Activated CD4-positive, alpha-beta memory T cell treated with anti-CD3 and anti-CD28 coated beads for 36 hours (primary cell): ENCODE measurements at regions of chr12 and their contacts with region 1.

Region 1: GRCh38 chr12:75289753-75290152 is 40.4 kb downstream of the CAPS2 start:
- DNase-seq: no peak
- H3K4me3 Mint-ChIP-seq: no peak overlapping the region
- H3K27ac Mint-ChIP-seq: no peak overlapping the region
- H3K4me1 Mint-ChIP-seq: no peaks in the 10 kb centered on the region
- H3K27me3 Mint-ChIP-seq: no peaks in the 10 kb centered on the region

Region 2: DNA sequence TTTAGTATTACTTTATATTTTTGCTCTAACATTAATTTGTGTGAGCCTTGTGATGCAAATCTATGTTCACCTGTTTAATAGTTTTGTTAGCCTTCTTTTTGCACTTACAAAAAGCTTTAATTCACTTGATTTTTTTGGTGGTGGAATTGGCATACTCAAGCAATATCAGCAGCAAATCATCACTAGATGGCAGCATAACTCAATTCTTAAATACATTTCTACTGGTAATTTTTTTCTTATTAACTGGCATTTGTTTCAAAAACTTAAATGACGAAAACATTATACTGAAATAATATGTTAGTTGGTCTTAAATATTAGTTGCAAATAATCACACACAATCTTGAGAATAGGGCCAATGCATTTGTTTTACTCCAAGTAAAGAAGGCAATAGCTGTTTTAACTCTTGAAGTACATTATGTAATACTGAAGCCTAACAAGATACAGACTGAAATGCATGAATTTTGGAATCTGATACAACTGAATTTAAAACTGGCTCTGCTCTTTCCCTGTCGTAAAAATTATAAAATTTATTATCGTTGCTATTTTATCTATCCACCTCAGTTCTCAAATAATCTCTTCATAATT is 600.6 kb before region 1 on chr12:
- CTCF ChIA-PET with region 1: interaction called, 8 read pairs
- POLR2A ChIA-PET with region 1: no interaction called
- intact Hi-C with region 1: loop called (anchors 5 kb)
- DNase-seq: no peak
- H3K4me3 Mint-ChIP-seq: no peak overlapping the region
- H3K27ac Mint-ChIP-seq: no peak overlapping the region
- H3K4me1 Mint-ChIP-seq: no peaks in the 10 kb centered on the region
- H3K27me3 Mint-ChIP-seq: peaks cover 5% of the 10 kb centered on the region

Region 3: DNA sequence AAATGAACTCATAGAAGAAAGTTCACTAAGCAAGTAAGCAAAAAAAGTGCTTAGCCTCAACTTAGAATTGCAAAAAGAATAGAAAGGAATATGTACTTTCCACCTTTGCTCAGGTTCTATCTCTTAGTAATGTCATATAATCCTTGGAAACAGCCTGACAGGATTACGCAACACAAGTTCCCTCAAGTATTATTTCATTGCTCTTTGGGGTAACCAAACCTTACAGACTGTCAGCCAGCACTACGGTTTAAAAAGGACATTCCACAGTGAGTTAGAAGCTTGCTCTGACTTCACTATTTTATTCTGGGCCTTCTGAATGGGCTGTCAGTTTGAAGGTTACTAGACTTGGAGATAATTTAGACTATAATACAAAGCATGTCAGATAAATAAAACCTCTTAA is 488.1 kb before region 1 on chr12:
- CTCF ChIA-PET with region 1: no interaction called
- POLR2A ChIA-PET with region 1: no interaction called
- intact Hi-C with region 1: loop called (anchors 1 kb)
- DNase-seq: no peak
- H3K4me3 Mint-ChIP-seq: no peak overlapping the region
- H3K27ac Mint-ChIP-seq: no peak overlapping the region
- H3K4me1 Mint-ChIP-seq: no peaks in the 10 kb centered on the region
- H3K27me3 Mint-ChIP-seq: no peaks in the 10 kb centered on the region